B cell (primary cell): ENCODE measurements at regions of chr11 and their contacts with region 1.

Region 1: DNA sequence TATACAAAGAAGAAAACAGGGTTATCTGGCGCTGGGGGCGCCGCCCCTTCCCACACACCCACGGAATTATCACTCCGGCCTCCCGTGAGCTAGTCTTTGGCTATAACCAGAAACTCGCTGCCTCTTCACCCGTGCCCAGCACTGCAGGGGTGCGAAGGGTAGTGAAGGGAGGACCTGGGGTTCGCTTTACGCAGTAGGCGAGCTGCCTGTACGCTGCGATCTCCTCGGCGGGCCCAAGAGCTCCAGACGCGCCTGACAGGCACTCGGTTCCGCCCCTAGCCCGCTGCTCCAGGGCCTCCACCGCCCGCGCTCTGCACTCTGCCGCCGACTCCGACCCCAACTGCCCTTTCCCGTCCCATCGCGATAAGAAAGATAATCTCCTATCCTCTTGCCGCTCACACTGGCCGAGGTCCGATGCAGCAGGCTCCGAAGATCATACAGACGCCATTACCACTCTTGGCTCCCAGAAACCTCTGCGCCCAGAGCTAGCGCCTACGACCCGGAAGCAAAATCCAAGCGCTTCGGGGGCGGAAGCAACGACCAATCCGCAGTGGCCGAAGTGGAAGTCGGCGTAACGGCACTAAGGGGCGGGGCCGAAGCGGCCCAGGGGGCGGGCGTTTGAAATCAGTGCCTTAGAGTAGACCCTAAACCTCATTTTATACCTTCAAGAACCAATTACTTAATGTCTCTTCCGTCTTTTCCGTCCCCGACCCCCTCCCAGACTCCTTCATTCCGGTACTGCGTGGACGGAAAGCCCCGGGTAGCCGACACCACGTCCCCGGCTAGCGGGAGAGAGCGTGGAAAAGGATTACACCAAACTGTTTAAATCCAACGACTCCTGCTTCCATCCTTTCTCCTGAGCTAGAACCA is at the starts of genes CWC15 and KDM4D:
- DNase-seq: peak; percentile 94
- ATAC-seq: peak; percentile 100
- H3K4me3 ChIP-seq: peak within 1 kb of the TSS; percentile 75 to 97 (median 87)
- H3K4me3 Mint-ChIP-seq: peak within 1 kb of the TSS; percentile 92
- H3K27ac ChIP-seq: peak within 1 kb of the TSS; percentile 74 to 83
- H3K27ac Mint-ChIP-seq: peak within 1 kb of the TSS; percentile 94
- H3K4me1 ChIP-seq: peaks cover 10 to 14% of the 10 kb centered on the region in 2 donors
- H3K4me1 Mint-ChIP-seq: peaks cover 13% of the 10 kb centered on the region
- H3K27me3 ChIP-seq: no peaks in the 10 kb centered on the region
- H3K27me3 Mint-ChIP-seq: no peaks in the 10 kb centered on the region
- CTCF ChIP-seq: no peak
- total RNA-seq, gene CWC15: 59.5 and 59.8 TPM in 2 replicates
- total RNA-seq, gene KDM4D: 0.44 and 0.73 TPM in 2 replicates

Region 2: GRCh38 chr11:95089620-95090542 is 116.5 kb after region 1 on chr11 and contains the start of gene ENDOD1:
- CTCF ChIA-PET with region 1: no interaction called
- POLR2A ChIA-PET with region 1: interaction called, 5 read pairs
- intact Hi-C with region 1: loop called (anchors 1 kb)
- DNase-seq: peak; percentile 93
- ATAC-seq: peak; percentile 94
- H3K4me3 ChIP-seq: peak within 1 kb of the TSS; percentile 13 to 82 (median 79)
- H3K4me3 Mint-ChIP-seq: peak within 1 kb of the TSS; percentile 94
- H3K27ac ChIP-seq: peak within 1 kb of the TSS; percentile 79 to 94
- H3K27ac Mint-ChIP-seq: peak within 1 kb of the TSS; percentile 98
- H3K4me1 ChIP-seq: peaks cover 50 to 52% of the 10 kb centered on the region in 2 donors
- H3K4me1 Mint-ChIP-seq: peaks cover 59% of the 10 kb centered on the region
- H3K27me3 ChIP-seq: no peaks in the 10 kb centered on the region
- H3K27me3 Mint-ChIP-seq: no peaks in the 10 kb centered on the region
- CTCF ChIP-seq: no peak
- total RNA-seq, gene ENDOD1: 11.7 and 12.0 TPM in 2 replicates